ENCODE measurements at regions of chr22 and their contacts with region 1.

Region 1: GRCh38 chr22:21938071-21938822 is 14.4 kb downstream of the PPM1F start:
- DNase-seq: peak; percentile 97 to 99
- ATAC-seq: peak; percentile 97
- H3K4me3 ChIP-seq: peak overlapping the region in 1 of 2 donors; percentile 57
- H3K27ac ChIP-seq: peak overlapping the region in 1 of 2 donors; percentile 97
- H3K4me1 ChIP-seq: no peaks in the 10 kb centered on the region
- H3K27me3 ChIP-seq: no peaks in the 10 kb centered on the region

Region 2: GRCh38 chr22:21666786-21667185 is 271.5 kb before region 1 on chr22:
- intact Hi-C with region 1: loop called in 1 of 2 experiments (anchors 5 kb)
- DNase-seq: no peak
- ATAC-seq: no peak
- H3K4me3 ChIP-seq: peak overlapping the region in 1 of 2 donors; percentile 85
- H3K27ac ChIP-seq: no peak overlapping the region
- H3K4me1 ChIP-seq: no peaks in the 10 kb centered on the region
- H3K27me3 ChIP-seq: no peaks in the 10 kb centered on the region

Region 3: GRCh38 chr22:21712894-21713712 is 225.1 kb before region 1 on chr22:
- intact Hi-C with region 1: loop called (anchors 1 to 2 kb)
- DNase-seq: peak in 1 of 2 donors; percentile 75
- ATAC-seq: peak; percentile 93
- H3K4me3 ChIP-seq: no peak overlapping the region
- H3K27ac ChIP-seq: peak overlapping the region in 1 of 2 donors; percentile 43
- H3K4me1 ChIP-seq: no peaks in the 10 kb centered on the region
- H3K27me3 ChIP-seq: no peaks in the 10 kb centered on the region

Region 4: GRCh38 chr22:21771631-21771976 is 166.6 kb before region 1 on chr22:
- intact Hi-C with region 1: loop called (anchors 5 kb)
- DNase-seq: no peak
- ATAC-seq: no peak
- H3K4me3 ChIP-seq: no peak overlapping the region
- H3K27ac ChIP-seq: no peak overlapping the region
- H3K4me1 ChIP-seq: peaks cover 0 to 2% of the 10 kb centered on the region in 2 donors
- H3K27me3 ChIP-seq: no peaks in the 10 kb centered on the region

Region 5: GRCh38 chr22:21778705-21779363 is 159.4 kb before region 1 on chr22:
- intact Hi-C with region 1: loop called (anchors 5 kb)
- DNase-seq: no peak
- ATAC-seq: no peak
- H3K4me3 ChIP-seq: no peak overlapping the region
- H3K27ac ChIP-seq: no peak overlapping the region
- H3K4me1 ChIP-seq: peaks cover 0 to 2% of the 10 kb centered on the region in 2 donors
- H3K27me3 ChIP-seq: no peaks in the 10 kb centered on the region

Region 6: GRCh38 chr22:21867528-21868266 is 70.5 kb before region 1 on chr22 and contains the start of gene MAPK1:
- intact Hi-C with region 1: loop called (anchors 2 to 10 kb)
- DNase-seq: peak; percentile 96 to 98
- ATAC-seq: peak; percentile 98
- H3K4me3 ChIP-seq: peak within 1 kb of the TSS; percentile 97
- H3K27ac ChIP-seq: peak within 1 kb of the TSS; percentile 91 to 95
- H3K4me1 ChIP-seq: peaks cover 0 to 3% of the 10 kb centered on the region in 2 donors
- H3K27me3 ChIP-seq: no peaks in the 10 kb centered on the region
- total RNA-seq, gene MAPK1: 137 to 159 TPM

Region 7: DNA sequence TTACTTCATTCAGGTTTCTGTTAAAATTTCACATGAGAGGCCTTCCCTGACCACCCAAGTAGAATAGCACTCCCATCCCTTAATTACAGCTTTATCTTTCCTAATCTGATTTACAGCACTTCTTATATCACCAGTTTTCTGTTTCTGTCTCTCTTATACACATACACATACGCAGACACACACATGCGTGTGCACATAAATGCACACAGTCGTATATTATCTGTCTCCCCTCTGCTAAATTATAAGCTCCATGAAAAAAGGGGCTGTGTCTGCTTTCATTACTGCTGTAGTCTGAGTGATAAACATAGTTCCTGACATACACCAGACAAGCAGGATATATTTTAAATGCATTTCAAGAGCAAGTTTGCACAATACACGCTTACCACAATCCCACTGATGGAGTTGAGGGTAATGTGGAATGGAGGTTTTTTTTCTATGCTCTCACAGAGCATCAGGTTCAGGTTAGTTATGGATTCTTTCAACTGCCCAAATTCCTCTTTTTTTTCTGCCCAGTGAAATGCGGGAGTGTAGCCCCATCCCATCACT is 58.0 kb after region 1 on chr22:
- intact Hi-C with region 1: no loop called
- DNase-seq: no peak
- ATAC-seq: no peak
- H3K4me3 ChIP-seq: no peak overlapping the region
- H3K27ac ChIP-seq: no peak overlapping the region
- H3K4me1 ChIP-seq: no peaks in the 10 kb centered on the region
- H3K27me3 ChIP-seq: no peaks in the 10 kb centered on the region

Measured in aorta (tissue), 5 donors.